CD8-positive, alpha-beta memory T cell (primary cell): ENCODE measurements at regions of chr3 and their contacts with region 1.

Region 1: DNA sequence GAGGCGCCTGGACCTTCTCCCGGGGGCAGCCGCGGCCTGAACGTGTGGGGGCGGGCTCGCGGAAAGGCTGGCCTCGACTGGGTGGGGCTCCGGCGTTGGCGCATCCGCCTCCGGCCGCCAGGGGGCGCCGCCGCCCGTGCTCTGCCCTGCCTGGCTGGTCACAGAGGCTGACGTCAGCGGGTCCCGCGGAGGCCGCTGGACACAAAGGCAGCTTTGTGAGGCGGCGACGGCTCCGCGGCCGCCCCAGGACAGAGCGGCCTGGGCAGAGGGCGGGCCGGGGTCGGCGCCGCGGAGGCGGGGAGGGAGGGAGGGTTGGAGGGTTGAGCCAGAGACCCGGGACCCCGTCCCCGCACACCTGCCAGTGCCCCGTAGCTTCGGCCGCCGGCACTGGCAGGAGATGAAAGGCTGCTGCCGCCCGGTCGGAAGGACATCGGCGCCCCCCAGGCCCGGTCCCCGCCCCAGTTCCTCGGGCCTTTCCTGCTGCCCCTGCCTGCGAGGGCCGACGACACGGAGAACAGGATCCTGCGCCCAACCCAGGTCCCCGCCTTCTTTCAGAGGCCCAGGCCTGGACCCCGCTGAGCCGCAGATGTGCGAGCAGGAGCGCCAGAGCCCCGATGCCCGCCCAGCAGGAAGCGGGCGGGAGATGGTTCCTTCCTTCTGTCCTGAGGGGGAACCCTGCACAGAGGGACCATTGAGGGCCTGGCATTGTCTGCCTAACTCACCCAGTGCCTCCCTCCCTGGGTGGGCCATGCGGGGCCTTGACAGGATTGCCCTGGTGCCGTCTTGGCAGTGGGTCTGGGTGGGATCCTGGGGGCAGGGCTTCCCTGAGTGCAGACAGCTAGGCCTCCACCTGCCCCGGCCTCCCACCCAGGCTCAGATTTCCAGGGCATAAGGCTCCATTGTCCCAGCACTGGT is 8.7 kb upstream of the SEMA3B start:
- DNase-seq: peak; percentile 77 to 88 (median 80)
- H3K4me3 ChIP-seq: peak overlapping the region; percentile 22
- H3K4me3 Mint-ChIP-seq: peak overlapping the region in 6 of 7 donors; percentile 50 to 86 (median 70)
- H3K27ac ChIP-seq: peak overlapping the region; percentile 47
- H3K27ac Mint-ChIP-seq: peak overlapping the region in 7 of 8 donors; percentile 3 to 98 (median 59)
- H3K4me1 ChIP-seq: peaks cover 5% of the 10 kb centered on the region
- H3K4me1 Mint-ChIP-seq: peaks cover 0 to 13% (median 8%) of the 10 kb centered on the region in 3 donors
- H3K27me3 ChIP-seq: no peaks in the 10 kb centered on the region
- H3K27me3 Mint-ChIP-seq: no peaks in the 10 kb centered on the region

Region 2: GRCh38 chr3:50235716-50236496 is 24.4 kb before region 1 on chr3 and contains the start of gene GNAI2:
- CTCF ChIA-PET with region 1: interaction called, 9 read pairs
- POLR2A ChIA-PET with region 1: interaction called, 11 read pairs
- DNase-seq: peak; percentile 98 to 99 (median 99)
- H3K4me3 ChIP-seq: peak within 1 kb of the TSS; percentile 99
- H3K4me3 Mint-ChIP-seq: peak within 1 kb of the TSS; percentile 87 to 99 (median 98)
- H3K27ac ChIP-seq: peak within 1 kb of the TSS; percentile 71
- H3K27ac Mint-ChIP-seq: peak within 1 kb of the TSS; percentile 93 to 99 (median 96)
- H3K4me1 ChIP-seq: peaks cover 37% of the 10 kb centered on the region
- H3K4me1 Mint-ChIP-seq: peaks cover 28 to 35% (median 33%) of the 10 kb centered on the region in 3 donors
- H3K27me3 ChIP-seq: no peaks in the 10 kb centered on the region
- H3K27me3 Mint-ChIP-seq: no peaks in the 10 kb centered on the region
- total RNA-seq, gene GNAI2: 259 to 265 TPM

Region 3: DNA sequence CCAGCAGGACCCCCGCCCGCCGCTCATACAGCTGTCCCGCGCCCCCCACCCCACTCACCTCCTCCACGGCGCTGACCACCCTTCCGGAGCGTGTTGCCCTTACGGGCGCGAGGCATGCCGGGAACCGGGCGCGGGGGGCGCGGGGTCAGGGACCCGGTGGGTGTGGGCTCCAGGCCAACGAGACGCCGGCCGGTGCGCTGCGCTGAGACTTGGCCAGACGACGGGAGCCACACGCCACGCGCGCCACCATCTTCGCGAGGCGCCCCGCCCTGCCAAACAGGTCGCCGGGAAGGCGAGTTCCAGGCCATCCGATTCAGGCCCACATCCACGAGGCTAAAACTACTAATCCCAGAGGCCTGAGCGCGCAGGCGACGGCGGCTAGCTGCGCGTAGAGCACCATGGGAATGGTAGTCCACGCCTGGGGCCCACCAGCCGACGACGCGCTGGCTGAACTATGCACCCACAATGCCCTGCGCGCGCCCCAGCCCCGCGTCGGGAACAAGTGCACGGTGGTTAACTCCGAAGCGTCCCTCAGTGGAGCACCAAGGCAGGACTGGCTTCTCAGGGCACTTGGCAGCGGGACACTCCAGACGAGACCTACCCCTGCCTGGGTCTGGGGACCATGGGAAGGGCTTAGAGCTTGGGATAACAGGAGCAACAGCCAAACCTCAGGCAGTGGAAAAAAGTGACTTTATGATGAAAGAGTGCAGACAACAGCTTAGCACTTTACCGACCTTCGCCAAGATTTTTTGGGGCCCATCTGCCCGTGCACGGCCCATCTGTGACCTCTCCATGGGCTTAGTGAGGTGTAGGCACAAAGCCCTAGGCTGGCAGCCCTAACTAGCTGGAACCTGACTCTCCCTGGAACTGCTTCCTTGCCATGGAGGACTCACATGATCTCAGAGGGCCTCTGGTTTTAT is 32.1 kb after region 1 on chr3 and contains the start of gene IFRD2:
- CTCF ChIA-PET with region 1: interaction called, 4 read pairs
- POLR2A ChIA-PET with region 1: interaction called, 11 read pairs
- DNase-seq: peak; percentile 93 to 96 (median 93)
- H3K4me3 ChIP-seq: peak within 1 kb of the TSS; percentile 88
- H3K4me3 Mint-ChIP-seq: peak within 1 kb of the TSS; percentile 86 to 93 (median 88)
- H3K27ac ChIP-seq: peak within 1 kb of the TSS; percentile 62
- H3K27ac Mint-ChIP-seq: peak within 1 kb of the TSS; percentile 85 to 98 (median 96)
- H3K4me1 ChIP-seq: peaks cover 21% of the 10 kb centered on the region
- H3K4me1 Mint-ChIP-seq: peaks cover 14 to 26% (median 16%) of the 10 kb centered on the region in 3 donors
- H3K27me3 ChIP-seq: no peaks in the 10 kb centered on the region
- H3K27me3 Mint-ChIP-seq: no peaks in the 10 kb centered on the region
- total RNA-seq, gene IFRD2: 191 to 192 TPM